ENCODE measurements at regions of chr17 and their contacts with region 1.

Region 1: DNA sequence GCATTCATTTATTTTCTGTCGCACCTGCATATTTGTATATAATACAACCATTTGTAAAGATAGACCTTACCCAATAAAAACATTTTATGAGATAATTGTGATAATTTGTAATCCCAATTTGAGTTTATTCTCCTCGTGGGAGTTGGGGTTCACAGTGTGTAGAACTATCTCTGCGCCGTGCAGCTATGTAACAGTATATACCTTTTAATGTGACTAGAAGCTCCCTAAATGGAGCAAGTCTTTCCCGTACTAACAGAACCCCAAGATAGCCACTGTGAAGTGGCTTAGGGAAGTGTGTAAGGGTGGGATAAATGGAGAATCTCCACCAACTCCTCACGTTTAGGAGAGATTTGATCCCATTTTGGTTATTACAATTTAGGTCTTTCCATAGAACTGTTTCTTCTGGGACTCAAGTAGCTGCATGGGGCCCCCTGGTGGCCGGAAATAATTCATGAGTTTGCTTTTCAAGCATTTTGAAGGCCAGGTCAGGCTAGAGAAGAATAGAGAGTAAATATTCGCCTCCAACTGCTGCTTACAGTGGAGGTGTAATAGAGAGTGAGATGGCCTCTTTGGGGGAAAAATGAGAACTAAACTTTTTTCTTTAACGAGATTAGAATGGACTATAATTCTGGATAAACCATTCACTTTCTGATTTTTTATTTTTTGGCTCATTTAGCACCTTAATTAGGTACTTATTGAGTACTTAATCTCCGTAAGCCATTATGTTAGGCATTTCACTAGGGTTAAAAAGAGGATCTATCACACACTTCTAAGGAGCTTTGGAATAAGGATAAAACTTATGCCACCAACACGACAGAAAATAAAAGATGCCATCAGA is 4.5 kb downstream of the TMEM100 start:
- DNase-seq: peak; percentile 39 to 78
- ATAC-seq: peak; percentile 72 to 88
- H3K4me3 ChIP-seq: no peak overlapping the region
- H3K27ac ChIP-seq: no peak overlapping the region
- H3K4me1 ChIP-seq: peaks cover 7% of the 10 kb centered on the region; the same call in 2 of the 3 replicates
- CTCF ChIP-seq: peak; percentile 91
- EP300 ChIP-seq: no peak
- POLR2A ChIP-seq: no peak
- RAD21 ChIP-seq: peak; percentile 71 to 84

Region 2: GRCh38 chr17:55601874-55602364 is 116.2 kb before region 1 on chr17:
- CTCF ChIA-PET with region 1: interaction called, 25 read pairs
- POLR2A ChIA-PET with region 1: no interaction called
- DNase-seq: peak; percentile 40 to 60
- ATAC-seq: peak; percentile 73 to 89; a peak in 5 of 6 replicates
- H3K4me3 ChIP-seq: no peak overlapping the region
- H3K27ac ChIP-seq: no peak overlapping the region
- H3K4me1 ChIP-seq: peaks cover 2% of the 10 kb centered on the region; the same call in 2 of the 3 replicates
- CTCF ChIP-seq: peak; percentile 83
- EP300 ChIP-seq: no peak
- POLR2A ChIP-seq: no peak
- RAD21 ChIP-seq: peak; percentile 91 to 93

Region 3: DNA sequence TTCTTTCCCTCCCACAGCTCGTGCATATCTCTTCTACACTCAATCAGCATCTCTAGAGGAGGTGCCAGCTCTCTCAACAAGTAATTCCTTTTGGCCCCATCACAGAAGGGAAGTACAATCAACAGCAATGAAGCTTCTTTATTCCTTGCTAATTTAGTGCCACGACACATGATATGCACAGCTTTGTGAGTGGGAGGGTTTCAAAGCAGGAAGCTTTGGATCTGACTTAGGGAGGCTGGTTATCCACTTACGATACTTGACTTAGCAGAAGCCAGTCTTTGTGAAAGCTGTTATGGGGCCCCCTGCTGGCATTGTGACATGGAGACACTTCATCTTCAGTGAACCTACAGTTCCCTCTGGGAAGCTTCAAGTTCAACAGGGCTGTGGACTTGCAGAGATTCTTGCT is 76.4 kb before region 1 on chr17:
- CTCF ChIA-PET with region 1: interaction called, 12 read pairs
- POLR2A ChIA-PET with region 1: no interaction called
- DNase-seq: peak; percentile 20 to 73
- ATAC-seq: peak; percentile 87 to 94
- H3K4me3 ChIP-seq: no peak overlapping the region
- H3K27ac ChIP-seq: no peak overlapping the region
- H3K4me1 ChIP-seq: no peaks in the 10 kb centered on the region
- CTCF ChIP-seq: peak; percentile 64
- EP300 ChIP-seq: no peak
- POLR2A ChIP-seq: no peak
- RAD21 ChIP-seq: peak; percentile 55 to 68

Region 4: DNA sequence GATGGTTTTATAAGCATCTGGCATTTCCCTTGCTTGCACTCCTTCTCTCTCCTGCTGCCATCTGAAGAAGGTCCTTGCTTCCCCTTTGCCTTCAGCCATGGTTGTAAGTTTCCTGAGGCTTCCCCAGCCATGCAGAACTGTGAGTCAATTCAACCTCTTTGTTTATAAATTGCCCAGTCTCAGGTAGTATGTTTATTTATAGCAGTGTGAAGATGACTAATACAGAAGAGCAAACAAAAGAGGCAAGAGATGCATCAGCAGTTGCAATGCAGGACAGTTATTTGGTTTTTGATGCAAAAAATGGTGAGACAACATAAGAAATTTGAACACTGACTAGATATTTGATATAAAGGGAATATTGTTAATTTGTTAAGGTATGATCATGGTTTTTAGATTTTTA is 12.3 kb before region 1 on chr17:
- CTCF ChIA-PET with region 1: interaction called, 36 read pairs
- POLR2A ChIA-PET with region 1: interaction called, 5 read pairs
- DNase-seq: peak; percentile 16 to 48
- ATAC-seq: peak; percentile 76 to 79; a peak in 5 of 6 replicates
- H3K4me3 ChIP-seq: no peak overlapping the region
- H3K27ac ChIP-seq: no peak overlapping the region
- H3K4me1 ChIP-seq: peaks cover 15% of the 10 kb centered on the region
- CTCF ChIP-seq: no peak
- EP300 ChIP-seq: no peak
- POLR2A ChIP-seq: no peak
- RAD21 ChIP-seq: no peak

Region 5: DNA sequence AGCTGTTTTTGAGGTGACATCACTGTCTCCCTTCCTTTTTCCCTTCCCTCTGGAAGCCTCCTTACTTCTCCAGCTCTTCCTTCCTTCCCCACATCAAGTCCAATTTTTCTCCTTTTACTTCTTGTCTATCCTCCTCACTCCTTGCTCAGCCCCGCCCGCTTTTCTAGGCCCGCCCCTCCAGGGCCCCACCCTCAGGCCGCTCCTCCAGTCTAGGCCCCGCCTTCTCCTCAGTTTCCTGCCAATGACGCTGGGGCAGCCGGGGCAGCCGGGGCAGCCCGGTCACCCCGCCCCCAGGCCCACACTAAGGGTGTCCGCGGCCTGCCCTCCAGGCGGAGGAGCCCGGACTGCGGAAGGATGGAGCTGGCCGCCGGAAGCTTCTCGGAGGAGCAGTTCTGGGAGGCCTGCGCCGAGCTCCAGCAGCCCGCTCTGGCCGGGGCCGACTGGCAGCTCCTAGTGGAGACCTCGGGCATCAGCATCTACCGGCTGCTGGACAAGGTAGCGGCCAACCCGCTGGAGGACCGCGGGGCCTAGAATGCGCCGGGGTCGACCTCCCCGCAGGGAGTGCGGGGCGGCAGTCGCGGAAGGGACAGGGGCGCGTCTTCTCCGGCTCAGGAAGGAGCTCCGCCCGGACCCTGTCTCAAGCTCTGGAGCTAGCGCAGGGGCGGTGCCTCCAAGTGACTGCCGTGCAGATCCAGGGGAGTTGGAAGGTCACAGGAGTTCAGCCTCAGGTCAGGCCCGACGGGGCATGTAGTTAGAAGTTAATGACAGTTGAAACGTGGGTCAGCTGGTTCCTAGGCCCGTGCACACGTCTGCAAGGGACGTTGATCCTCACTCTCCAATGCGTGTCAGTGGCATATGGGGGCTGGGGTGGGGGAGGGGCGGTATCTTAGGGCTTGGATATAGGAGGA is 32.9 kb after region 1 on chr17 and contains the start of gene PCTP:
- CTCF ChIA-PET with region 1: interaction called, 16 read pairs
- POLR2A ChIA-PET with region 1: interaction called, 5 read pairs
- DNase-seq: peak; percentile 91 to 94
- ATAC-seq: peak; percentile 97 to 99
- H3K4me3 ChIP-seq: peak within 1 kb of the TSS; percentile 58
- H3K27ac ChIP-seq: peak within 1 kb of the TSS; percentile 86 to 94
- H3K4me1 ChIP-seq: peaks cover 12% of the 10 kb centered on the region; the same call in 2 of the 3 replicates
- CTCF ChIP-seq: 0 out of 3 replicates have a peak, but pooled peaks have one; percentile 5
- EP300 ChIP-seq: no peak
- POLR2A ChIP-seq: peak; percentile 87
- RAD21 ChIP-seq: no peak; a peak in 1 of 5 replicates
- polyA plus RNA-seq, gene PCTP: 28.0 and 31.5 TPM in 2 replicates

Region 6: DNA sequence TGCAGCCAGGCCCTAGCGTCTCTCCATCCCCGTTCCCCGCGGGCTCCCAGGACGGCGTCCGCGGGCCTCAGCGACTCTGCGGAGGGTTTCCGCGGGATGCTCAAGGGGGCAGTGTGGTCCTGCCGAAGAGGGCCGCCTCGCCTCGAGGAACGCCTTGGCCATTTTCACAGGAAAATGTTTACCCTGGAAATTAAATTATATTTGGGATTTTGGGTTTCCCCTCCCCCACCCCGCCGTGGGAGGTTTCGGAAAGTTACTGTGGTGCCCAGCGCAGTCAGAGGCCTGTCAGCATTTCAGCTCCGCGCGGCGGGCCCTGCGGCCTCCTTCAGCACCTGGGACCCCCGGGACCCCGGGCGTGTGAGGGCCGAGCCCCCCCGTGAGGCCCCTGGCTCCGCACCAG is 127.3 kb after region 1 on chr17:
- CTCF ChIA-PET with region 1: no interaction called
- POLR2A ChIA-PET with region 1: no interaction called
- DNase-seq: peak; percentile 13 to 26
- ATAC-seq: peak; percentile 82 to 93
- H3K4me3 ChIP-seq: no peak overlapping the region; the same call in 2 of the 3 replicates
- H3K27ac ChIP-seq: no peak overlapping the region
- H3K4me1 ChIP-seq: no peaks in the 10 kb centered on the region
- CTCF ChIP-seq: peak; percentile 36; the same call in 2 of the 3 replicates
- EP300 ChIP-seq: no peak
- POLR2A ChIP-seq: no peak
- RAD21 ChIP-seq: peak; percentile 58 to 59

Region 7: DNA sequence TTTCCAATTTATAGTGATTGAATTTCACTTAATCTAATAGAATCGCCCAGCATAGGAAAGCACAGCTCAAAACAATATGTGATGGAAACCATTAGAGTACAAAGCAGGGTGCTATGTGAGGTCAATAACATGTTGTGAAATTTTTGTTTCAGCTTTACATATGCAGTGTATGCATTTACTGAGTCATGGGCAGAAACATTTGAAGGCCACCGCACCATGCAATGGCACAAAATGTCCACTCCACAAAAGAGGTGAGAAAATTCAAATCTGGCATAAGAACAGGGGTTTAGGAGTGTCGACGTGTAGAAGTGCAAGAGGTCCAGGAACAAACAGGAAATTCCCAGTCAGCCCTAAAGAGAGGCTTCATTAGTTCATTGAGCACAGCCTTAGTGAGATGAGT is 566.4 kb after region 1 on chr17:
- CTCF ChIA-PET with region 1: no interaction called
- POLR2A ChIA-PET with region 1: no interaction called
- DNase-seq: no peak
- ATAC-seq: no peak
- H3K4me3 ChIP-seq: no peak overlapping the region
- H3K27ac ChIP-seq: no peak overlapping the region
- H3K4me1 ChIP-seq: no peaks in the 10 kb centered on the region
- CTCF ChIP-seq: no peak
- EP300 ChIP-seq: no peak
- POLR2A ChIP-seq: no peak
- RAD21 ChIP-seq: no peak